Caco-2 (cell line): ENCODE measurements at regions of chr11 and their contacts with region 1.

Region 1: GRCh38 chr11:125568970-125569914 is at the start of gene EI24:
- DNase-seq: peak; percentile 97 to 99
- H3K4me3 ChIP-seq: peak within 1 kb of the TSS; percentile 99
- H3K4me3 Mint-ChIP-seq: peak within 1 kb of the TSS; percentile 80
- H3K27ac Mint-ChIP-seq: peak within 1 kb of the TSS; percentile 58
- H3K4me1 ChIP-seq: peaks cover 27% of the 10 kb centered on the region
- H3K4me1 Mint-ChIP-seq: peaks cover 15% of the 10 kb centered on the region
- H3K27me3 ChIP-seq: no peaks in the 10 kb centered on the region
- H3K27me3 Mint-ChIP-seq: no peaks in the 10 kb centered on the region
- CTCF ChIP-seq: peak; percentile 89 to 98
- total RNA-seq, gene EI24: 164 and 170 TPM in 2 replicates

Region 2: DNA sequence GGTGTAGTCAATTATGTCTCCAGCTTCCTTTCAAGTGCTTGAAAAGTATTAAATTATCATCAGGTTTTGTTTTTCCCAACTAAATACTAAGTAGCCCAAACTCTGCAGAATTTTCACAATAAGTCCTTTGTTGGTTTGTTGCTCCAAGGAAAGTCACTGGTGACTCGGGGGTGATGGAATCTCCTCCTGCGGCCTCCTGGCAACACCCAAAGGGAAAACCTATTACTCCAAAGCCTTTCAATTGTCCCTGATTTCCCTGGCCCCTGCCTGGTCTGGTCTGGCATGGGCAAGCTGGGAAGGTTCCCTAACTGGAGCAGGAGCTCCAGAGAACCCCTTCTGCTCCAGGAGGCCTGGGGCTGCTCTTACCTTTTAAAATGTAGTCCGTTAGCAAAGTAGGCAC is 121.1 kb before region 1 on chr11:
- CTCF ChIA-PET with region 1: no interaction called
- POLR2A ChIA-PET with region 1: no interaction called
- intact Hi-C with region 1: no loop called
- DNase-seq: no peak
- H3K4me3 ChIP-seq: no peak overlapping the region
- H3K4me3 Mint-ChIP-seq: no peak overlapping the region
- H3K27ac Mint-ChIP-seq: no peak overlapping the region
- H3K4me1 ChIP-seq: 0 out of 2 replicates have a peak, but pooled peaks cover 3% of the 10 kb centered on the region
- H3K4me1 Mint-ChIP-seq: peaks cover 7% of the 10 kb centered on the region
- H3K27me3 ChIP-seq: no peaks in the 10 kb centered on the region
- H3K27me3 Mint-ChIP-seq: peaks cover 3% of the 10 kb centered on the region
- CTCF ChIP-seq: no peak

Region 3: DNA sequence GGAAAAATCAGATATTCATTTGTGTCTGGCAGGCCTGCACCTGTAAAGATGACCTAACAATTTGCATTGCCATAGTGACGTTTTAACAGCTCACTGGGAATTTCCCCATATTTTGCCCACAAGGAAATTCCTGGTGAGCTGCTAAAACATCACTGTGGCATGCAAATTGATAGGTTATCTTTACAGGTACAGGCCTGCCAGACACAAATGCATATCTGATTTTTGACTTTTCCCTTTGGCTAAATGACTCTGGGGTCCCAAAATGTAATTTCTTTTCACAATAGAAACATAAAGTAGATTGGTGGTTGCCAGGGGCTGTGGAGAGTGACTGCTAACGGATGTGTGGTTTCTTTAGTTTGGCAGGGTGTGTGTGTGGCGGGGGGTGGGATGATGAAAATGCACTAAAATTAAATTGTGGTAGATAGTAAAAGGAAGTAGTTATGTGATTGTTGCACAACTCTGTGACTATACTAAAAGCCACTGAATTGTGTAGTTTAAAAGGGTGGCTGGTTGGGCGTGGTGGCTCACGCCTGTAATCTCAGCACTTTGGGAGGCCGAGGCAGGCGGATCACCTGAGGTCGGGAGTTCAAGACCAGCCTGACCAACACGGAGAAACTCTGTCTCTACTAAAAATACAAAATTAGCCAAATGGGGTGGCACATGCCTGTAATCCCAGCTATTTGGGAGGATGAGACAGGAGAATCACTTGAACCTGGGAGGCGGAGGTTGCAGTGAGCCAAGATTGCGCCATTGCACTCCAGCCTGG is 54.7 kb before region 1 on chr11:
- CTCF ChIA-PET with region 1: interaction called, 9 read pairs
- POLR2A ChIA-PET with region 1: interaction called, 3 read pairs
- intact Hi-C with region 1: loop called (anchors 2 kb)
- DNase-seq: peak; percentile 56 to 59
- H3K4me3 ChIP-seq: no peak overlapping the region
- H3K4me3 Mint-ChIP-seq: no peak overlapping the region
- H3K27ac Mint-ChIP-seq: peak overlapping the region; percentile 74
- H3K4me1 ChIP-seq: peaks cover 13% of the 10 kb centered on the region
- H3K4me1 Mint-ChIP-seq: peaks cover 12% of the 10 kb centered on the region
- H3K27me3 ChIP-seq: no peaks in the 10 kb centered on the region
- H3K27me3 Mint-ChIP-seq: no peaks in the 10 kb centered on the region
- CTCF ChIP-seq: no peak

Region 4: DNA sequence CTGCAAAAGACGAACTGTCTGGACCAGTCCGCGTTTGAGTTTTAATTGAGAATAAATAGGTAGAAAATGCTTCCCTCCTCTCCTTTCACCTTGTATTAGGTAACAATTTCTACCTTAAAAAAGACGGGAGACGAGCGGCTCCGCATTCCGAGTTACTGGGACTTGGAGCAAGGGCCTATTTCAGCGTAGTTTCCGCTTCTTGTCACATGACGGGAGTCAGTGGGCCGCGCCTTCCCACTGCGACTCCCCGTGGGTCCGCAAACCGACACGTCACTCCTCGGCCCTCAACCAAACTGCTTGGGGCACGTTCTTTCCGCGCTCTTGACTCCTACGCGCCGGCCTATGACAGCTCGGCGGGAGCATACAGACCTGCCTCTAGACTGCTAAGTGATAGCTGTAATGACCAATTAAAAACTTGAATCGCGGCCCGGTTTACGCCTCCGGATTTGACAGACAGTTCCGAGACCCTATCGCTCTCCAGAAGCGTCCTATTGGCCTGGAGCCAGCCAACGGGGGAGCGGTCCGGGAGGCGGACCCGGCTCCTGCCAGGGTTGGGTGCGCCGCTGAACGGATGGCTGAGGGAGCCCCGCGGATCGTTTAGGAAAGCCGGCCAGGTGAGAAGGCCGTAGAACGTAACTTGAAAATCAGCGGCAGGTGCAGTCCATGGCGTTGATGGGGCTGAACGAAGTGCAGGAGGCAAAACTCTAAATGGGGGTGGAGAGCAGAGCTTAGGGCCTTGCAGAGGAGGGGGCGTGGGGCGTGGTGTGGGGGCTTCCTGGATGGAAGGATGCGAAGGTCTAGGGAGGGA is 23.3 kb after region 1 on chr11 and contains the start of gene STT3A:
- CTCF ChIA-PET with region 1: interaction called, 7 read pairs
- POLR2A ChIA-PET with region 1: interaction called, 20 read pairs
- intact Hi-C with region 1: loop called (anchors 1 kb)
- DNase-seq: peak; percentile 100
- H3K4me3 ChIP-seq: peak within 1 kb of the TSS; percentile 85
- H3K4me3 Mint-ChIP-seq: peak within 1 kb of the TSS; percentile 98
- H3K27ac Mint-ChIP-seq: peak within 1 kb of the TSS; percentile 99
- H3K4me1 ChIP-seq: no peaks in the 10 kb centered on the region
- H3K4me1 Mint-ChIP-seq: peaks cover 22% of the 10 kb centered on the region
- H3K27me3 ChIP-seq: no peaks in the 10 kb centered on the region
- H3K27me3 Mint-ChIP-seq: no peaks in the 10 kb centered on the region
- CTCF ChIP-seq: no peak
- total RNA-seq, gene STT3A: 517 and 531 TPM in 2 replicates

Region 5: GRCh38 chr11:125625630-125626287 is 56.5 kb after region 1 on chr11:
- CTCF ChIA-PET with region 1: interaction called, 6 read pairs
- POLR2A ChIA-PET with region 1: interaction called, 5 read pairs
- intact Hi-C with region 1: loop called (anchors 1 kb)
- DNase-seq: peak; percentile 96 to 98
- H3K4me3 ChIP-seq: peak overlapping the region; percentile 68
- H3K4me3 Mint-ChIP-seq: peak overlapping the region; percentile 82
- H3K27ac Mint-ChIP-seq: peak overlapping the region; percentile 92
- H3K4me1 ChIP-seq: peaks cover 8% of the 10 kb centered on the region
- H3K4me1 Mint-ChIP-seq: peaks cover 17% of the 10 kb centered on the region
- H3K27me3 ChIP-seq: no peaks in the 10 kb centered on the region
- H3K27me3 Mint-ChIP-seq: no peaks in the 10 kb centered on the region
- CTCF ChIP-seq: no peak

Region 6: GRCh38 chr11:125663910-125664309 is 94.7 kb after region 1 on chr11:
- CTCF ChIA-PET with region 1: no interaction called
- POLR2A ChIA-PET with region 1: no interaction called
- intact Hi-C with region 1: no loop called
- DNase-seq: no peak
- H3K4me3 ChIP-seq: no peak overlapping the region
- H3K4me3 Mint-ChIP-seq: no peak overlapping the region
- H3K27ac Mint-ChIP-seq: no peak overlapping the region
- H3K4me1 ChIP-seq: no peaks in the 10 kb centered on the region
- H3K4me1 Mint-ChIP-seq: no peaks in the 10 kb centered on the region
- H3K27me3 ChIP-seq: no peaks in the 10 kb centered on the region
- H3K27me3 Mint-ChIP-seq: no peaks in the 10 kb centered on the region
- CTCF ChIP-seq: no peak

Region 7: DNA sequence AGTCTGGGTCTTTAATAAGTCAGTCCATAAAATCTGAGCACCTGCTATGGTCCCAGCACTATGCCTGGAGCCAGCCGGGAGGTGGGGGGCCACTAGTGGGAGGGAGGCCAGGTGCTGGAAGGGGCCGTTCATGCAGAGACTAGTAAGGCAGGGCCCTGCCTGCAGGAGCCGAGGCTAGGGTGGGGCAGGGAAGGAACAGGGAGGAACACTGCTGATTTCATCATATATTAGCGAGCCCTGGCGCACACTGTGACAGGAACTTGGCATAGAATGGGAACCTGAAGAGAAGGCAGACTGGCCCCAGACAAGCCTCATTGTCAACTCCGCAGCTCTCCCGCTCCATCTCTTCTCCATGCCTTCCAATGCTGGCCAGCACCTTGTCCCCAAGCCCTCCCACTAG is 383.7 kb after region 1 on chr11:
- CTCF ChIA-PET with region 1: no interaction called
- POLR2A ChIA-PET with region 1: no interaction called
- intact Hi-C with region 1: no loop called
- DNase-seq: no peak
- H3K4me3 ChIP-seq: no peak overlapping the region
- H3K4me3 Mint-ChIP-seq: no peak overlapping the region
- H3K27ac Mint-ChIP-seq: no peak overlapping the region
- H3K4me1 ChIP-seq: no peaks in the 10 kb centered on the region
- H3K4me1 Mint-ChIP-seq: no peaks in the 10 kb centered on the region
- H3K27me3 ChIP-seq: no peaks in the 10 kb centered on the region
- H3K27me3 Mint-ChIP-seq: peaks cover 4% of the 10 kb centered on the region
- CTCF ChIP-seq: no peak

Region 8: GRCh38 chr11:126282736-126283591 is 713.7 kb after region 1 on chr11 and contains the start of gene TIRAP:
- CTCF ChIA-PET with region 1: no interaction called
- POLR2A ChIA-PET with region 1: no interaction called
- intact Hi-C with region 1: no loop called
- DNase-seq: peak; percentile 70 to 82
- H3K4me3 ChIP-seq: peak within 1 kb of the TSS; percentile 71
- H3K4me3 Mint-ChIP-seq: peak within 1 kb of the TSS; percentile 96
- H3K27ac Mint-ChIP-seq: peak within 1 kb of the TSS; percentile 80
- H3K4me1 ChIP-seq: peaks cover 7% of the 10 kb centered on the region
- H3K4me1 Mint-ChIP-seq: peaks cover 11% of the 10 kb centered on the region
- H3K27me3 ChIP-seq: no peaks in the 10 kb centered on the region
- H3K27me3 Mint-ChIP-seq: no peaks in the 10 kb centered on the region
- CTCF ChIP-seq: peak in 1 of 2 experiments; percentile 5
- total RNA-seq, gene TIRAP: 25.1 and 27.8 TPM in 2 replicates